Activated CD4-positive, alpha-beta memory T cell treated with anti-CD3 and anti-CD28 coated beads for 36 hours (primary cell): ENCODE measurements at regions of chr5 and their contacts with region 1.

Region 1: GRCh38 chr5:134845852-134846640 is at the start of gene C5orf24:
- DNase-seq: peak; percentile 96
- H3K4me3 Mint-ChIP-seq: peak within 1 kb of the TSS; percentile 86
- H3K27ac Mint-ChIP-seq: peak within 1 kb of the TSS; percentile 96
- H3K4me1 Mint-ChIP-seq: peaks cover 28% of the 10 kb centered on the region
- H3K27me3 Mint-ChIP-seq: no peaks in the 10 kb centered on the region
- total RNA-seq, gene C5orf24: 21.9 to 25.2 TPM

Region 2: DNA sequence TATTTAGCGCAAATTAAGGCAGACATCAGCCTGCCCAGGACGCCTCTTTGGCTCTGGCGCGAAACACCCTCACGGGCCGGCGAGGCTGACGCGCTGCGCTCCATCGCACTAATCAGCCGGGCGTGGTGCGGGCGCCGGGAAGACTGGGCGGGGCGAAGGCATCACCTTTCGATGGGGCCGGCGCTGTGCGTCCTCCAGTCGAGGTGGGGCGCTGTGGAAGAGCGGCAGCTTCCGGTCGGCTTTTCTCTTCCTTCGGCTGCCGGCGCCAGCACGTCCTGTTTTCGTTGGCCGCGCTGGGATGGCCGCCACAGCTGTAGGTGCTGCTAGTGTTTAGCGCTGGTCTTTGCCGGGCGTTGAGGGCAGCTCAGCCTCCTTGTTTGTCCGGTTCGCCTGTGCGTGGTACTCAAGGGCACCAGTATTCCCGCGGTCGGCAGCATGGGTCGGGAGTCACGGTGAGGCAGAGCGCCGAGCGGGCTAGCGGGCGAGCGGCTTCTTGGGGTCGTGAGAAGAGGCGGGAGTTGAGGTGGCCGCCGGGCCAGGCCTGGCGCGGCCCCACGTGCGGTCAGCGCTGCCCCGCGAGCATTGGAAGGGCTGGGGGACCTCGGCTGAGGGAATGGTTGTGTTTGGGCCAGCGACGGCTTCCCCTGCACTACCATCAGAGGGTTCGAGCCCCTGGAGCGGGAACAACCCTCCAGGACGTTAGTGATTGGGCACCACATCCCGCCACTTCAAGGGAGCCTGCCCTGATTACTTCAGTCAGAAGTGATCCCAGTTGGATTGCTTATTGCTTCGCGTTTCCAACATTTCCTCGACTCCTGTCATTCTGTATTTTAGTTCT is 87.3 kb before region 1 on chr5 and contains the start of gene DDX46:
- CTCF ChIA-PET with region 1: interaction called, 3 read pairs
- POLR2A ChIA-PET with region 1: interaction called, 7 read pairs
- intact Hi-C with region 1: loop called (anchors 1 kb)
- DNase-seq: peak; percentile 97
- H3K4me3 Mint-ChIP-seq: peak within 1 kb of the TSS; percentile 100
- H3K27ac Mint-ChIP-seq: peak within 1 kb of the TSS; percentile 87
- H3K4me1 Mint-ChIP-seq: peaks cover 34% of the 10 kb centered on the region
- H3K27me3 Mint-ChIP-seq: no peaks in the 10 kb centered on the region
- total RNA-seq, gene DDX46: 67.4 to 68.0 TPM

Region 3: DNA sequence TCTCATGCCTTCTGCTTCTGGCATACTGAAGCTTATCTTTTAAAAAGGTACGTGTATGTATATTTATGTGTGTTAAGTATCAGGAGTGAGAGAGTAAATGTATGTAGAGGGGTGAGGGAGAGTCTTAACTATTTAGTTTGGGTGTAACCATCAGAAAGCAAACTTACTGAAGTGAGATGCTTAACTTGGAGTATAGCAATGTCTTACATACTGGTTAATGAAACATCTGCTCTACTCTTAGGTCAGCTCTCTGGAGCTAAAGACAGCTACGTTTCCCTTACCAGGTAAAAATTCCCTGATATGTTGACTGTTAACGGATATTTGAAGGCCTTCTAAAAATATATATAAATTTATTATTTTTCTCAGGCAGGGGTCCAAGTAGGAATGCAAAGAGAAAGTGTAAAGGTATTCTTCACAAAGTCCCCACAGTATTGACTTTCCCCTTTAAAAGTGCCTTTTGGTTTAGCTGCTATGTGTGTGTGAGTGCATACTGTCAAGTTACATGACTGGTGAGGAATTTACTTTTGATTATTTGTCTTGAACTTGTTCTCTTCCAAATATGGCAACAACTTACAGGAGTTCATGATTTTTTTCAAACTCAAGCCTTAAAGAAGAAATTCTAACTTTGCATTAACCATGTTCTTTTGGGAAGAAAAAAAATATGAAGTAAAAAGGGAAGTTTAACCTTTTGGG is 12.6 kb before region 1 on chr5:
- CTCF ChIA-PET with region 1: no interaction called
- POLR2A ChIA-PET with region 1: interaction called, 22 read pairs
- intact Hi-C with region 1: no loop called
- DNase-seq: no peak
- H3K4me3 Mint-ChIP-seq: no peak overlapping the region
- H3K27ac Mint-ChIP-seq: no peak overlapping the region
- H3K4me1 Mint-ChIP-seq: no peaks in the 10 kb centered on the region
- H3K27me3 Mint-ChIP-seq: no peaks in the 10 kb centered on the region

Region 4: GRCh38 chr5:134873987-134874830 is 28.2 kb after region 1 on chr5 and contains the start of gene TXNDC15:
- CTCF ChIA-PET with region 1: interaction called, 6 read pairs
- POLR2A ChIA-PET with region 1: interaction called, 30 read pairs
- intact Hi-C with region 1: loop called (anchors 1 kb)
- DNase-seq: peak; percentile 89
- H3K4me3 Mint-ChIP-seq: peak within 1 kb of the TSS; percentile 95
- H3K27ac Mint-ChIP-seq: peak within 1 kb of the TSS; percentile 94
- H3K4me1 Mint-ChIP-seq: peaks cover 36% of the 10 kb centered on the region
- H3K27me3 Mint-ChIP-seq: no peaks in the 10 kb centered on the region
- total RNA-seq, gene TXNDC15: 29.6 to 30.9 TPM

Region 5: GRCh38 chr5:134935711-134936602 is 89.9 kb after region 1 on chr5:
- CTCF ChIA-PET with region 1: no interaction called
- POLR2A ChIA-PET with region 1: no interaction called
- intact Hi-C with region 1: no loop called
- DNase-seq: no peak
- H3K4me3 Mint-ChIP-seq: no peak overlapping the region
- H3K27ac Mint-ChIP-seq: no peak overlapping the region
- H3K4me1 Mint-ChIP-seq: no peaks in the 10 kb centered on the region
- H3K27me3 Mint-ChIP-seq: no peaks in the 10 kb centered on the region